SK-N-SH (cell line): ENCODE measurements at regions of chr12 and their contacts with region 1.

Region 1: DNA sequence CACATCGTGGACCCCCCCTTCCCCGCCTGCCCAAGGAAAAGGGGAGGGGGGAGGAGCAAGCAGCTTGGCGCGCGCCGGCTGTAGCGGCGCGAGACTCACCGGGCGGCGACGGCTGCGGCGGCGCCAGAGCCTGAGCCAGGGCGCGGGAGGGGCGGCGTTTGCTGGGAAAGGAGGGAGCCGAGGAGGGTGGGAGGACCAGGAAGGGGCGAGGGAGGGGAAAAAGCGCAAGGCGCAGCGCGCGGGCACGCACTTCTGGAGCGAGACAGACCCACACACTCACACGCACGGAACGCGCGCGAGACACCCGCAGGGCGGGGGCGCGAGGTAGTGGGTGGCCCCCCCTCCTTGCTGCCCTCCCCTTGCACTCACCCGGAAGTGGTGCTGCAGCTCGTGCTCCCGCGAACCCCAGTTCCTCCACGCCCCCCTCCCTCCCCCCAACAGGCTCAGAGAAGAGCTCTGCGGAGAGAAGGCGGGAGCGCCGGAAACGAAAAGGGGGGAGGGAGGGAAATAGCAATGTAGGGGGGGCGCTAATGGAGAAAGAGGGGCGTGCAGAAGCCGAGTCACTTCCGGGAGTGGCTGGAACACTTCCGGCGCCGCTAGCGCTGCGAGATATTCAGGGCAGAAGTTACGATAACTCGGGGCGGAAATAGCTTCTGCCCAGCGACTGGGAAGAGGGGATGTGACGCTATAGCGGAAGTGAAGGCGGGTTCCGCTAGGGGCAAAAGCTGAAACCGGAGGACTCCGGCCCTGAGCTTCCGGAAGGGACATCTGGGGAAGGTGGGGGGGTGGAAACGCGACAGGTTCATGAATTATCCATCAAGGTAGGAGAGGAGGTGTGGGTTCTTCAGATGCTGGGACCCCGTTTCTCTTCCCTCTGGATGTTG is at the start of gene ZNF384:
- DNase-seq: peak; percentile 94
- H3K4me3 ChIP-seq: peak within 1 kb of the TSS; percentile 78 to 79
- H3K27ac ChIP-seq: peak within 1 kb of the TSS; percentile 90 to 99
- H3K4me1 ChIP-seq: peaks cover 8% of the 10 kb centered on the region in 2 experiments; a peak in 2 of 4 replicates
- H3K27me3 ChIP-seq: no peaks in the 10 kb centered on the region
- CTCF ChIP-seq: no peak
- EP300 ChIP-seq: no peak
- RAD21 ChIP-seq: no peak
- polyA plus RNA-seq, gene ZNF384: 64.9 and 80.4 TPM in 2 replicates

Region 2: DNA sequence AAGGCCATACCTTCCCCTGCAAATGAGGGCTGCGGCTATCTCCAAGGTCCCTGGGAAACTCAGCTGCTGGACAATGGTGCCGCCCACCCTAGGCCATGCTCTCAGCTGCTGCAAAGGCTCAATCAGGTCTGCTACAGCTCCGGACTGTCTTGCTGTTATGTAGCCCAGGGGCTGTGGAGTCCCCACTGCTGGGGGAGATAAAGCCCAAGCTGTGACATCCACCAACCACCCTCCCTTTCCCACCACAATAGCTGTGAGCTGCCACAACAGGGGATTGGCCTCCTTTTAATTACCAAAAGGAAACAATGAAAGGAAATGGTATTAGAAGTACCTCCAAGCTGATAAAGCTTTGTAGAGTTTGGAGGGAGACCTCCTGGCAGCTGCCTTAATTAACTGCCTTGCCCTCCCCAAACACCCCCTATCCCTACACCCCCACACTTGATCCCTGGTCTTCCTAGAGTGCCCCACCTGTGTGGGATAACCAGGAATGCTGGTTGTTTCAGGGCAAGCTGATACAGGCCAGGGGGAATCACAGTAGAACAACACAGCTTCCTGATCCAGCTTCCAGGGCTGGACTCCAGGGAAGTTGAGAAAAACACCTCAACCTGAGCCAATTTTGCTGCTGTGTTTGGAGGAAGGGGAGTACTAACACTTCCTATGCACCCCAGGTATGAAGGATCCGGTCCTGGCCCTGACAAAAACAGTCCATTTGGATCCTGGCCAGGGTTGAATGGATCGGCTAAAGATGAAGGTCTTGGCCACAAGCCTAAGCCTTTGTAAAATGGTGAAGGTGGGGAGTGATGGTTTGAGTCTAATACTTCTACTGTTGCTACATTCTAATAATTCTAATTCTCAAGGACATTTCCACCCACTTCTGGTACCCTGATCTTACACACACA is 564.6 kb before region 1 on chr12 and contains the start of gene VWF:
- CTCF ChIA-PET with region 1: no interaction called
- POLR2A ChIA-PET with region 1: no interaction called
- DNase-seq: no peak
- H3K4me3 ChIP-seq: no peak within 1 kb of the TSS
- H3K27ac ChIP-seq: peak within 1 kb of the TSS in 1 of 2 experiments; percentile 19; a peak in 1 of 4 replicates
- H3K4me1 ChIP-seq: peaks cover 0 to 19% of the 10 kb centered on the region in 2 experiments; a peak in 1 of 4 replicates
- H3K27me3 ChIP-seq: no peaks in the 10 kb centered on the region
- CTCF ChIP-seq: no peak
- EP300 ChIP-seq: no peak
- RAD21 ChIP-seq: no peak
- polyA plus RNA-seq, gene VWF: 0.02 and 0.12 TPM in 2 replicates

Region 3: DNA sequence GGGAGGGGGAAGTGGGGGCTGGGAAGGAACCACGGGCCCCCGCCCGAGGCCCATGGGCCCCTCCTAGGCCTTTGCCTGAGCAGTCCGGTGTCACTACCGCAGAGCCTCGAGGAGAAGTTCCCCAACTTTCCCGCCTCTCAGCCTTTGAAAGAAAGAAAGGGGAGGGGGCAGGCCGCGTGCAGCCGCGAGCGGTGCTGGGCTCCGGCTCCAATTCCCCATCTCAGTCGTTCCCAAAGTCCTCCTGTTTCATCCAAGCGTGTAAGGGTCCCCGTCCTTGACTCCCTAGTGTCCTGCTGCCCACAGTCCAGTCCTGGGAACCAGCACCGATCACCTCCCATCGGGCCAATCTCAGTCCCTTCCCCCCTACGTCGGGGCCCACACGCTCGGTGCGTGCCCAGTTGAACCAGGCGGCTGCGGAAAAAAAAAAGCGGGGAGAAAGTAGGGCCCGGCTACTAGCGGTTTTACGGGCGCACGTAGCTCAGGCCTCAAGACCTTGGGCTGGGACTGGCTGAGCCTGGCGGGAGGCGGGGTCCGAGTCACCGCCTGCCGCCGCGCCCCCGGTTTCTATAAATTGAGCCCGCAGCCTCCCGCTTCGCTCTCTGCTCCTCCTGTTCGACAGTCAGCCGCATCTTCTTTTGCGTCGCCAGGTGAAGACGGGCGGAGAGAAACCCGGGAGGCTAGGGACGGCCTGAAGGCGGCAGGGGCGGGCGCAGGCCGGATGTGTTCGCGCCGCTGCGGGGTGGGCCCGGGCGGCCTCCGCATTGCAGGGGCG is 155.1 kb before region 1 on chr12 and contains the start of gene GAPDH:
- CTCF ChIA-PET with region 1: interaction called, 3 read pairs
- POLR2A ChIA-PET with region 1: interaction called, 10 read pairs
- DNase-seq: peak; percentile 94
- H3K4me3 ChIP-seq: peak within 1 kb of the TSS; percentile 93 to 97
- H3K27ac ChIP-seq: peak within 1 kb of the TSS; percentile 96 to 98
- H3K4me1 ChIP-seq: peaks cover 15 to 34% of the 10 kb centered on the region in 2 experiments; a peak in 3 of 4 replicates
- H3K27me3 ChIP-seq: no peaks in the 10 kb centered on the region
- CTCF ChIP-seq: no peak
- EP300 ChIP-seq: peak in 1 of 2 experiments; percentile 57; a peak in 2 of 4 replicates
- RAD21 ChIP-seq: no peak
- polyA plus RNA-seq, gene GAPDH: 7,875 and 8,077 TPM in 2 replicates

Region 4: GRCh38 chr12:6613776-6614512 is 75.3 kb before region 1 on chr12:
- CTCF ChIA-PET with region 1: interaction called, 11 read pairs
- POLR2A ChIA-PET with region 1: interaction called, 35 read pairs
- DNase-seq: peak; percentile 88
- H3K4me3 ChIP-seq: no peak overlapping the region; a peak in 1 of 4 replicates
- H3K27ac ChIP-seq: peak overlapping the region; percentile 91 to 100
- H3K4me1 ChIP-seq: peaks cover 26 to 35% of the 10 kb centered on the region in 2 experiments
- H3K27me3 ChIP-seq: no peaks in the 10 kb centered on the region
- CTCF ChIP-seq: peak; percentile 43
- EP300 ChIP-seq: no peak
- RAD21 ChIP-seq: 0 out of 2 replicates have a peak, but pooled peaks have one; percentile 30

Region 5: DNA sequence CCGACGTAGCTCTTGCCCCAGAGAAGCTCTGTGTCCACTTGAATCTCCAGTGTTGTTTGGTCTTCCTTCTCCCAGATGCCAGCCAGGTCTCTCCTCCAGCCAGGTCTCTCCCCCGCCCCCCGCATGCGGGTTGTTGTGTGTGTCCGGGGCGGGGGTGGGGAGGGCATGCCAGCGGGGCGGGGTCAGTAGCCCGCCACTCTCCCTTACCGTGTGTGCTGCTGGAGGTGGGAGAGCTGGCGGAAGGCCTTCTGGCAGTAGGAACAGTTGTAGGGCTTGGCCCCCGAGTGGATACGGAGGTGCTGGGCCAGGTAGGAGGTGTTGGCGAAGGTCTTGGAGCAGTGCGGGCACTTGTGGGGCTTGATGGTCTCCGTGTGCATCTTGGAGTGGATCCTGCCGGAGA is 17.1 kb before region 1 on chr12:
- CTCF ChIA-PET with region 1: interaction called, 50 read pairs
- POLR2A ChIA-PET with region 1: interaction called, 4 read pairs
- DNase-seq: no peak
- H3K4me3 ChIP-seq: no peak overlapping the region
- H3K27ac ChIP-seq: no peak overlapping the region
- H3K4me1 ChIP-seq: no peaks in the 10 kb centered on the region
- H3K27me3 ChIP-seq: no peaks in the 10 kb centered on the region
- CTCF ChIP-seq: no peak
- EP300 ChIP-seq: no peak
- RAD21 ChIP-seq: no peak

Region 6: GRCh38 chr12:6807170-6807569 is 117.9 kb after region 1 on chr12:
- CTCF ChIA-PET with region 1: no interaction called
- POLR2A ChIA-PET with region 1: no interaction called
- DNase-seq: no peak
- H3K4me3 ChIP-seq: no peak overlapping the region
- H3K27ac ChIP-seq: no peak overlapping the region
- H3K4me1 ChIP-seq: no peaks in the 10 kb centered on the region
- H3K27me3 ChIP-seq: no peaks in the 10 kb centered on the region
- CTCF ChIP-seq: no peak
- EP300 ChIP-seq: no peak
- RAD21 ChIP-seq: no peak

Region 7: DNA sequence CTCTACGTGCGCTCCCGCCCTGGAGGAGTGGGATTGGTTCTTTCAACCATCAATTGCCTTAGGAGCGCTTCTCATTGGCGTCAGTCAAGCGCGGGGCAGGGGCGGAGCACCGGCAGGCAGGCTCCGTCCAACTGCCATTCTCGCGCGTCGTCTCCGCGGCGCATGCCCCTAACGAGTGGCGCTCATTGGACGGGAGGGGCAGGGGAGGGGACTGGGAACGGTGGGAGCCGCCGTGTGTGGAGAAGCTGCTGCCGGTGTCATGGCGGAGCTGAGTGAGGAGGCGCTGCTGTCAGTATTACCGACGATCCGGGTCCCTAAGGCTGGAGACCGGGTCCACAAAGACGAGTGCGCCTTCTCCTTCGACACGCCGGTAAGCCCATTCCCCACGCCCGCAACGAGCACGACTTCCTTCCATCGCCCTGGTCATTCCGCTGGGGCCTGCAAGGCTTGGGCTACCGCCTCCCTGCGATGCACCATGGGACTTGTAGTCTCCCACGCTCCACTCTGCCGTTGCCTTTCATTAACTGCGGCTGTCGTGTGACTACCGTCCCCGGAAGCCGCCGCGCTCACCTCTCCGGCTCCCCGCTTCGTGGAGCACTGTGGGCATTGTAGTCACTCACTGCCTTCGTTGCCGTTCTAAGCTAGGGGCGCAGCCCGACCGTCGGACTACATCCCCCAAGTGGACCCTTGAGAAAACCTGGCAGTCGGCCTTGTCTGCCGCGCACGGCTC is 162.8 kb after region 1 on chr12 and contains the start of gene USP5:
- CTCF ChIA-PET with region 1: interaction called, 3 read pairs
- POLR2A ChIA-PET with region 1: interaction called, 10 read pairs
- DNase-seq: peak; percentile 92
- H3K4me3 ChIP-seq: peak within 1 kb of the TSS; percentile 70 to 76
- H3K27ac ChIP-seq: peak within 1 kb of the TSS; percentile 73 to 97
- H3K4me1 ChIP-seq: peaks cover 7 to 17% of the 10 kb centered on the region in 2 experiments
- H3K27me3 ChIP-seq: no peaks in the 10 kb centered on the region
- CTCF ChIP-seq: 0 out of 2 replicates have a peak, but pooled peaks have one; percentile 7
- EP300 ChIP-seq: no peak
- RAD21 ChIP-seq: no peak
- polyA plus RNA-seq, gene USP5: 97.2 and 100 TPM in 2 replicates